ENCODE measurements at regions of chr1 and their contacts with region 1.

Region 1: DNA sequence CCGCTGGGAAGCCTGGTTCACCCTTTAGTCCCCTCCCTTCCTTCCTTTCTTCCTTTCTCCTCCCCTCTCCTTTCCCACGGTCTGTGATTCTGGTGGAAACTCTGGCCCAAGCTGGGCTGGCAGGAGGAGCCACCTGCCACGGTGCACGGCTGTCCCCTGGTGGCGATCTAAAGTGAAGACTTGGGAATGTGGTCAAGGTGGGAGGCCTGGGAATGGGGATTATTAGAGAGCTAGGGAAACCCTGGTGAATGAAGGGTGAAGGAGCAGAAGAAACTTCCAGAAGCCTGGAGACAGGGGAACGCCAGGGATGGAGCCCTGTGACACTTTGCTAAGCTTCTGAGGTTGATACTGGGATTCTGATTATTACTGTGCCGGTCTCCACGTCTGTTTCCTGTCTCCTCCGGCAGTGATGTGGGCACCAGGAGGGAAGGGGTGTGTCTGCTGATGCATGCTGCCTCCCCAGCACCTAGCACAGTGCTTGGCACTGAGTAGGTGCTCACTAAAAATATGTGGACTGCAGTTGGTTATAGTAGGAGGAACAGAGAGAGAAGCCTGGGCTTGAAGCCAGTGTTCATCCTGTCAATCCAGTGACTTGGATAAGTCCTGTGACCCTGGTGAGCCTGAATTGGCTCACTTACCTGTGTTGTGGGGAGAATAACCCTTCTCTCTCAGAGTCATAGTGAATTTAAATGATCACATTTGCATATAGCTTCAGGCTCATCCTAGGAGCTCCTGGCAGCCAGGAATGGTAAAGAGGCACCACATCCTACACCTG is 71.2 kb upstream of the NBPF3 start:
- DNase-seq: peak; percentile 87
- H3K4me3 Mint-ChIP-seq: no peak overlapping the region
- H3K27ac Mint-ChIP-seq: no peak overlapping the region
- H3K4me1 Mint-ChIP-seq: peaks cover 11% of the 10 kb centered on the region
- H3K27me3 Mint-ChIP-seq: no peaks in the 10 kb centered on the region
- CTCF ChIP-seq: peak; percentile 98

Region 2: DNA sequence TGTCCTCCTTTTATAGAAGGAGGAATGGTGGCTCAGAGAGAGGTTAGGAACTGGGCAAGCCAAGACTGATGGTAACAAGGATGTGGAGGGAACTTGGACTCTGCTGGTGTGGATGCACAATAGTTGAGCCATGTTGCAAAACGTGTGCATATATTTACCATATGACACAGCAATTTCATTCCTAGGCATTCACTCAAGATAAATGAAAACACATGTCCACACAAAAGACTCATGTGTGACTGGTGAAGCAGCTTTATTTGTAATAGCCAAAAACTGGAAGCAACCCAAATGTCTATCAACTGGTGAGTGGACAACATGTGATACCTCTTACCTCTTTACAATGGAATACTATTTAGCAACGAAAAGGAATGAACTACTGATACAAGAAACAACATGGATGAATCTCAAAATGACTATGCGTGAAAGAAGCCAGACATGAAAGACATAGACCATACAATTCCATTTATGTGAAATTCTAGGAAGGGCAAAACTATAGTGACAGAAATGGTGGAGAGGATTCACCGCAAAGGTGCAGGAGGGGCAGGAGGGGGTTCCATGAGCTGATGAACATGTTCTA is 918.9 kb before region 1 on chr1:
- CTCF ChIA-PET with region 1: no interaction called
- POLR2A ChIA-PET with region 1: no interaction called
- intact Hi-C with region 1: no loop called
- DNase-seq: no peak
- H3K4me3 Mint-ChIP-seq: no peak overlapping the region
- H3K27ac Mint-ChIP-seq: no peak overlapping the region
- H3K4me1 Mint-ChIP-seq: peaks cover 6% of the 10 kb centered on the region
- H3K27me3 Mint-ChIP-seq: no peaks in the 10 kb centered on the region
- CTCF ChIP-seq: no peak

Region 3: GRCh38 chr1:21216835-21217811 is 151.6 kb before region 1 on chr1:
- CTCF ChIA-PET with region 1: interaction called, 38 read pairs
- POLR2A ChIA-PET with region 1: no interaction called
- intact Hi-C with region 1: loop called (anchors 1 kb)
- DNase-seq: peak; percentile 65
- H3K4me3 Mint-ChIP-seq: no peak overlapping the region
- H3K27ac Mint-ChIP-seq: no peak overlapping the region
- H3K4me1 Mint-ChIP-seq: no peaks in the 10 kb centered on the region
- H3K27me3 Mint-ChIP-seq: no peaks in the 10 kb centered on the region
- CTCF ChIP-seq: peak; percentile 87

Region 4: DNA sequence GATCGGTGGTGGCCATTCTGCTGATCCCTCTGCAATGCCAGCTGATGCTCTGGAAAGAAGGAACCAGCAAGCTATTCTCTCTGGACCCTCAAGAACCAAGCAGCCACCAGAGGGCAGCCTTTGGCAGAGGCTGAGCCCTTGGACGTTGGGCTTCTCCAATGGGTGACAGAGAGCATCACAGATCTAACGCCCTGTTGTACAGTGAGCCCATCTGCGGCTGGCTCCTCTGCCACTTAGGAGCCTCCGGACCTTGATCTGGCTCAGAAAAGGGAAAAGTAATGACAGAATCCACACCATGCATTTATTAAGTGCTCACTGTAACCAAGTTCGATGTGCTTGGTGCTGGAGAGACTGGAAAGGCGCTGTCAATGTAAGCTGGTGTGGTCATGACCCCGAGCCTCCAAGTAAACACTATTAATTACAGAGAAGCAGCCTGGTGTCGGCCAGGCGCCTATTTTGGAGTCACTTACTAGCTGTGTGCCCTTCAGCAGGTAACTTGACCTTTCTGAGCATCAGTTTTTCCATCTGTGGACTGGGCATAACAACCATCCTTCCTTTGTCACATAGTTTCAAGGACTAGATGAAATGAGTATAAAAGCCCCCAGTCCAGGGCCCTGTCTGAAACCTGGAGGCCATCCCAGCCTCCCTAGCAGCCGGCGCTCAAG is 113.3 kb before region 1 on chr1:
- CTCF ChIA-PET with region 1: interaction called, 180 read pairs
- POLR2A ChIA-PET with region 1: interaction called, 14 read pairs
- intact Hi-C with region 1: loop called (anchors 1 kb)
- DNase-seq: peak; percentile 87
- H3K4me3 Mint-ChIP-seq: no peak overlapping the region
- H3K27ac Mint-ChIP-seq: no peak overlapping the region
- H3K4me1 Mint-ChIP-seq: peaks cover 12% of the 10 kb centered on the region
- H3K27me3 Mint-ChIP-seq: no peaks in the 10 kb centered on the region
- CTCF ChIP-seq: peak; percentile 89

Region 5: GRCh38 chr1:21351898-21352297 is 16.8 kb before region 1 on chr1:
- CTCF ChIA-PET with region 1: interaction called, 10 read pairs
- POLR2A ChIA-PET with region 1: interaction called, 3 read pairs
- intact Hi-C with region 1: no loop called
- DNase-seq: no peak
- H3K4me3 Mint-ChIP-seq: no peak overlapping the region
- H3K27ac Mint-ChIP-seq: no peak overlapping the region
- H3K4me1 Mint-ChIP-seq: peaks cover 11% of the 10 kb centered on the region
- H3K27me3 Mint-ChIP-seq: no peaks in the 10 kb centered on the region
- CTCF ChIP-seq: no peak

Region 6: GRCh38 chr1:21573971-21574465 is 205.3 kb after region 1 on chr1:
- CTCF ChIA-PET with region 1: interaction called, 32 read pairs
- POLR2A ChIA-PET with region 1: no interaction called
- intact Hi-C with region 1: loop called (anchors 2 kb)
- DNase-seq: peak; percentile 87
- H3K4me3 Mint-ChIP-seq: no peak overlapping the region
- H3K27ac Mint-ChIP-seq: no peak overlapping the region
- H3K4me1 Mint-ChIP-seq: no peaks in the 10 kb centered on the region
- H3K27me3 Mint-ChIP-seq: no peaks in the 10 kb centered on the region
- CTCF ChIP-seq: peak; percentile 30

Region 7: DNA sequence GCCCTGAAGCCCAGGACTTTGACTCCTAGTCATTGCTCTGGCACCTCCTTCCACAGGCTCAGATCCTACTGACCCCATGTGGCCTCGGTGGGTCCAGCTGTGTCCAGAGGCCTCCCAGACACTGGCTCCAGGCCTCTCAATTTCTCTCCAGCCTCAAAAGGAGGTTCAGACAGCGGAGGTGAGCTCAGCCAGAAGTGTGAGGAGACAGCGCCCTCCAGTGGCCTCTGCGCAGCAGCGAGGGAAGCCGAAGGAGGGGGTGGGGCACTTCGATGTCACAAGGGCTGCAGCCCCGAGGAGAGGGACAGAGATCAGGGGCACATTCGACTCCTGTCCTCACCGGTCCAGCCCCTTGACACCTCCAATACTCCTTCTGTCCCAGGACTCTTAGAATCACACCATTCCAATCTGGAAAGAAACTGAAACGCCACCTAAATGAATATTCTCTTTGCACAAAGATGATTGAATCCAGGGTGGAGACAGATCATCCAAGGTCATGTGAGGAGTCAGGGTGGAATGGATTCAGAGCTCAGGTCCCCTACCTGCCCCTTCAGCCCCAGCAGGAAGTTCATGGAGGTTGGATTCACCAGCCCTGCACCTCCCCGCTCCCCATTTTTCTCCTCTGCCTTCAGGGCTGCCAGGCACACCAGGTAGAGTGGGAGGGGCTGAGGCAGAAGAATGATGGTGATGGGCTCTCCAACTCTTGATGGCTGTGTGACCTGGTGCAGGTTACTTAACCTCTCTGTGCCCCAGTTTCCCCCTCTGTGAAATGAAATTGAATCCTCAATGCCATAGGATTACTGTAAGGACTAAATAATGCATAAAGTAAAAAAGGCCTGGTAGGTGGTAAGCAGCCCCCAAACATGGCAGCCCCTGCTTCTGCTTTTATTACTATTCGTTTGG is 1048.1 kb after region 1 on chr1:
- CTCF ChIA-PET with region 1: no interaction called
- POLR2A ChIA-PET with region 1: no interaction called
- intact Hi-C with region 1: loop called (anchors 5 kb)
- DNase-seq: peak; percentile 77
- H3K4me3 Mint-ChIP-seq: no peak overlapping the region
- H3K27ac Mint-ChIP-seq: no peak overlapping the region
- H3K4me1 Mint-ChIP-seq: no peaks in the 10 kb centered on the region
- H3K27me3 Mint-ChIP-seq: peaks cover 29% of the 10 kb centered on the region
- CTCF ChIP-seq: peak; percentile 97